ENCODE measurements at regions of chr10 and their contacts with region 1.

Region 1: DNA sequence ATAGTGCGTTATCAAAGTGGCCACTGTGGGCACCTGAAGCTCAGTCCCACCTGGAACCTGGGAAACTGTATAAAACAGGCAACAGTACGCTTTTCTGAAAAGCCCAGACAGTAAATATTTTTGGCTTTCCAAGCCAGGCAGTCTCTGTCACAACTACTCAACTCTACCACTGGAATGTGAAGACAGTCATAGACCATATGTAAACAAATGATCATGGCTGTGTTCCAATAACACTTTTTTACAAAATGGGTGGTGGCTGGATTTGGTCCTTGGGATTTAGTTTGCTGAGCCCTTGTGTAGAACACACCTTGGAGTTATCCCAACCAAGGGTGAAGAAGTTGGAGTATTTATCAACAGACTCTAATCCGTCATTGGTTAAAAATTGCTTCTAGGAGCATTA is 259.9 kb downstream of the SKIDA1 start:
- DNase-seq: no peak
- H3K4me3 ChIP-seq: no peak overlapping the region
- H3K27ac ChIP-seq: no peak overlapping the region
- H3K4me1 ChIP-seq: no peaks in the 10 kb centered on the region
- H3K27me3 ChIP-seq: no peaks in the 10 kb centered on the region
- CTCF ChIP-seq: no peak

Region 2: DNA sequence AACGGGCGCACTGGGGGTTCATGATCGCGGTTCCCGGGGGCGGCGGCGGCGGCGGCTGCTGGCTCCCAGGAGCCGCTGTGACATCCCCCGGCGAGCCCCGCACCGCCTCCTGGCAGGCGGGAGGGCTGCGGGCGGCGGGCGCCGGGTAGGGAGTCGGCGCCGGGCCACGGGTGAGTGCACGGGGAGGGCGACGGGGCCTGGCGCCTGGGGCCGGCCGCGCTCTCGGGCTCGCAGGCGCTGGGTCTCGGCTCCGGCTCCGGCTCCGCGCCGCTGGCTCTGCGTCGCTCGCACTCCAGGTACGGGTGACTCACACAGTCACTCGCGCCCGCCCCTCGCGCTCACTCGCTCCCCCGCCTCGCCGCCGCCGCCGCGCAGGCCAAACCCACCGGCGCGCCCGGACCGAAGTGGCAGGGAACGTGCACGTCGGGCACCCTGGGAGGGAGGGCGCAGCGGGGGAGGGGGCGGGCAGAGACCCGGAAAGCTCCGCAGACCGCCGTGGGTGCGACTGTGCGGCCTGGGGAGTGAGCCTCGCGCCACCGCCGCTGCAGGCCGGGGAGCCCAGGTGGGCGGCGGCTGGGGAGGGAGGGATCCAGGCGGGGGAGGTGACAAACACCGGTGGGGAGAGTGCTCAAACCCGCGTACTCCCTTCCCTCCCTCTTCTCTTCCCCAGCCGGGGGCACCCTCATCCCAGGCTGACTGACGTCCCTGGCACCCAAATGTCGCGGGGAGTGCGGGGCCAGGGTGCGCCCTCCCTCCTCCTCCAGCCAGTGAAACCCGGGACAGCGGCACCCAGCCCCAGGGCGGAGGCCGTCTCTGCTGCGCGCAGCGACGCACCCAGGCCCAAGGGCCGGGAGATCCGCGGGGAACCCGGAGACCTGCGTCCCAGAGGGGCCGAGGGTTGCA is 91.6 kb before region 1 on chr10:
- CTCF ChIA-PET with region 1: no interaction called
- POLR2A ChIA-PET with region 1: no interaction called
- intact Hi-C with region 1: loop called (anchors 5 kb)
- DNase-seq: peak; percentile 76
- H3K4me3 ChIP-seq: peak overlapping the region; percentile 65
- H3K27ac ChIP-seq: no peak overlapping the region
- H3K4me1 ChIP-seq: peaks cover 17% of the 10 kb centered on the region
- H3K27me3 ChIP-seq: no peaks in the 10 kb centered on the region
- CTCF ChIP-seq: no peak

Region 3: GRCh38 chr10:22183771-22184461 is 918.3 kb after region 1 on chr10:
- CTCF ChIA-PET with region 1: no interaction called
- POLR2A ChIA-PET with region 1: no interaction called
- intact Hi-C with region 1: no loop called
- DNase-seq: peak; percentile 21
- H3K4me3 ChIP-seq: no peak overlapping the region
- H3K27ac ChIP-seq: no peak overlapping the region
- H3K4me1 ChIP-seq: no peaks in the 10 kb centered on the region
- H3K27me3 ChIP-seq: no peaks in the 10 kb centered on the region
- CTCF ChIP-seq: no peak

Measured in A673 (cell line).